ENCODE measurements at regions of chr1 and their contacts with region 1.

Region 1: GRCh38 chr1:6646499-6647148 is 22.0 kb downstream of the THAP3 start:
- DNase-seq: peak in 24 of 42 donors; percentile 13 to 73 (median 40)

Region 2: GRCh38 chr1:6489799-6490180 is 156.8 kb before region 1 on chr1:
- intact Hi-C with region 1: loop called (anchors 10 kb)
- DNase-seq: peak; percentile 40 to 85 (median 70)

Region 3: GRCh38 chr1:6672558-6672957 is 25.9 kb after region 1 on chr1:
- intact Hi-C with region 1: no loop called
- DNase-seq: no peak